ENCODE measurements at regions of chr21 and their contacts with region 1.

Region 1: GRCh38 chr21:36209626-36210171 is 53.1 kb downstream of the DOP1B start:
- DNase-seq: peak; percentile 46 to 53 (median 49)
- H3K4me3 ChIP-seq: no peak overlapping the region
- H3K4me3 Mint-ChIP-seq: no peak overlapping the region
- H3K27ac ChIP-seq: no peak overlapping the region
- H3K27ac Mint-ChIP-seq: peak overlapping the region in 3 of 7 donors; percentile 2 to 22 (median 10)
- H3K4me1 ChIP-seq: no peaks in the 10 kb centered on the region
- H3K4me1 Mint-ChIP-seq: peaks cover 3 to 8% (median 5%) of the 10 kb centered on the region in 4 donors
- H3K27me3 ChIP-seq: no peaks in the 10 kb centered on the region
- H3K27me3 Mint-ChIP-seq: no peaks in the 10 kb centered on the region

Region 2: DNA sequence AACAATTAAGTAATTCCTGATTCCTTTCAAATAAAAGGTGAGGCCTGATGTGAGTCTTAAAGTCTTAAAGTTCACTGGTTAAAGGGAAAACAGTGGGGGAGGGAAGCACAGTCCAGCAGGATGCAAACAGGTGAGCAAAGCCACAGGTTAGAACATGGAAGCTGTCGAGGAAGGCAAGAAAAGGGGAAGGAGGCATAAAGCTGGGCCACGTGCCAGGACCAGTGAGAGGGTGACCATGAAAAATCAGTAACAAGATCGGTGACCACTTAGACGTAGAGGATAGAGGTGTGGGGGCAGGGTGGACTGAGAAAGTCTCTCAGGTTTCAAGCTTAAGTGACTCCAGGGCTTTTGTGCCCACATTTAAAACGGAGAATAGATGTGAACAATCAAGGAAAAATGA is 380.6 kb before region 1 on chr21:
- CTCF ChIA-PET with region 1: no interaction called
- POLR2A ChIA-PET with region 1: no interaction called
- intact Hi-C with region 1: no loop called
- DNase-seq: no peak
- H3K4me3 ChIP-seq: no peak overlapping the region
- H3K4me3 Mint-ChIP-seq: no peak overlapping the region
- H3K27ac ChIP-seq: no peak overlapping the region
- H3K27ac Mint-ChIP-seq: no peak overlapping the region
- H3K4me1 ChIP-seq: no peaks in the 10 kb centered on the region
- H3K4me1 Mint-ChIP-seq: peaks cover 0 to 6% (median 0%) of the 10 kb centered on the region in 4 donors
- H3K27me3 ChIP-seq: no peaks in the 10 kb centered on the region
- H3K27me3 Mint-ChIP-seq: peaks cover 22 to 28% of the 10 kb centered on the region in 2 donors

Region 3: GRCh38 chr21:36028127-36029069 is 181.3 kb before region 1 on chr21:
- CTCF ChIA-PET with region 1: no interaction called
- POLR2A ChIA-PET with region 1: no interaction called
- intact Hi-C with region 1: no loop called
- DNase-seq: peak; percentile 51 to 65 (median 57)
- H3K4me3 ChIP-seq: no peak overlapping the region
- H3K4me3 Mint-ChIP-seq: peak overlapping the region in 1 of 8 donors; percentile 9
- H3K27ac ChIP-seq: no peak overlapping the region
- H3K27ac Mint-ChIP-seq: peak overlapping the region in 2 of 7 donors; percentile 4 to 30
- H3K4me1 ChIP-seq: peaks cover 3% of the 10 kb centered on the region
- H3K4me1 Mint-ChIP-seq: peaks cover 4 to 7% (median 5%) of the 10 kb centered on the region in 4 donors
- H3K27me3 ChIP-seq: no peaks in the 10 kb centered on the region
- H3K27me3 Mint-ChIP-seq: no peaks in the 10 kb centered on the region

Region 4: DNA sequence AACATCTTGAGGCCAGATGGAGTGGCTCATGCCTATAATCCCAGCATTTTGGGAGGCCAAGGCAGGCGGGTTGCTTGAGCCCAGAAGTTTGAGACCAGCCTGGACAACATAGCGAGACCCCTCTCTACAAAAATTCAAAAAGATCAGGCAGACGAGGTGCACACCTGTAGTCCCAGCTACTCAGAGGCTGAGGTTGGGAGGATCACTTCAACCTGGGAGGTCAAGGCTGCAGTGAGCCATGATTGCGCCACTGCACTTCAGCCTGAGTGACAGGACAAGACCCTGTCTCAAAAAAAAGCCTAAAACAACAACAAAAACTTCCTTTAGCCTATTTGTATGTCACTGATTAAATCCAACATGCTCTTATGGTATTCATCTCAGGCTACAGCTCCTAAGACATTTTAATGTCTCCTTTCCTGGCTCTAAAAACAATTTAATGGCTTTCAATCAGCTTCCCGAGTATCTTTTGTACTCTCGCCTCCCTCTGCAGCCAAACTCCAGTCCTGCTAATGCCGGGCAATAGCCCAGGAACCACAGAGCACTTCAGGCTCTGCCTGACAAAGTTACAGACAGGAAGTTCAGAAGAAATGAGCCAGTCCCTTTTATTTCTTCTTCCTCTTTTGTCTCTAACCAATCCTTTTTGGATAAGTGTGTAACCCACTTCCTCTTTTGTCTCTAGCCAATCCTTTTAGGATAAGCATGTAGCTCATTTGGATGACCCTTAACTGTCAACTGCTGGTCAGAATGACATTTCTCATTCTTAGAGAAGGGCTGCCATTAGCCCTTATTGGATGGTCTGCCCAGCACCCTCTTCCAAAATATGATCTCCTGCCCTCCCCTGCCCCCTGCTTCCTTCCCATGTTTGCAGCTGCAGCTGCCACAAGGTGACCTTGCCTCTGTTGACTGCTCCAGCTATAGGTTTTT is 59.6 kb before region 1 on chr21:
- CTCF ChIA-PET with region 1: interaction called, 69 read pairs
- POLR2A ChIA-PET with region 1: interaction called, 3 read pairs
- intact Hi-C with region 1: loop called (anchors 1 kb)
- DNase-seq: no peak
- H3K4me3 ChIP-seq: no peak overlapping the region
- H3K4me3 Mint-ChIP-seq: peak overlapping the region in 7 of 8 donors; percentile 54 to 77 (median 65)
- H3K27ac ChIP-seq: no peak overlapping the region
- H3K27ac Mint-ChIP-seq: peak overlapping the region; percentile 76 to 95 (median 91)
- H3K4me1 ChIP-seq: peaks cover 44% of the 10 kb centered on the region
- H3K4me1 Mint-ChIP-seq: peaks cover 29 to 63% (median 46%) of the 10 kb centered on the region in 4 donors
- H3K27me3 ChIP-seq: no peaks in the 10 kb centered on the region
- H3K27me3 Mint-ChIP-seq: no peaks in the 10 kb centered on the region

Region 5: DNA sequence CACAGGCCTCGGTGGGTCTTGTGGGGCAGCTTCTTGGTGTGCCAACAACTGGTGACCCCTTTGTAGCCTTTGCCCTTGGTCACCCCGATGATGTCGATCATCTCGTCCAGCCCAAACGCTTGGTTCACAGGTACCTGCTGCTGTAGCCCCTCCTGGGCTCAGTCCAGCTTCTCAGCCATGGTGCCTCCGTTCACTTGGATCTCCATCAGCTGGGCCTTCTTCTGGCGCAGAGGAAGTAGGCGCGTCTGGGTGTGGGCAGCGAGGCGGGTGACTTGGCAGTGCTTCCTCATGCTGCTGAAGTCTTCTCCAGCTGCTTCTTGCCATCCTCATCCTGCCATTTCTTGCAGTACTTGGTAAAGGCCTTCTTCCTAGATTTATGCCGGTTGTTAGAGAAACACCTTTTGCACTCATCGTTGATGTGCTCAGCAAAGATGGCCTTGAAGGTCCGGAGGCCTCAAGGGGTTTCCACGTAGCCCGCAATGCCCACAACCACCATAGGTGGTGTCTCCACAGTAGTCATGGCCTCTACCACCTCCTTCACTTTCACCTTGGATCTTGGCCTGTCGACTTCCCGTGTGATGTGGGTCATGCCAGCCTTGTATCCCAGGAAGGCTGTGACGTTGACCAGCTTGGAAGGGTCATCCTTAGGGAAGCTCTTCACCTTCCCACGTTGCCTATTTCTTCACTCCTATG is 40.1 kb before region 1 on chr21:
- CTCF ChIA-PET with region 1: interaction called, 15 read pairs
- POLR2A ChIA-PET with region 1: no interaction called
- intact Hi-C with region 1: loop called (anchors 5 kb)
- DNase-seq: no peak
- H3K4me3 ChIP-seq: no peak overlapping the region
- H3K4me3 Mint-ChIP-seq: no peak overlapping the region
- H3K27ac ChIP-seq: no peak overlapping the region
- H3K27ac Mint-ChIP-seq: peak overlapping the region in 1 of 7 donors; percentile 86
- H3K4me1 ChIP-seq: peaks cover 16% of the 10 kb centered on the region
- H3K4me1 Mint-ChIP-seq: peaks cover 6 to 19% (median 7%) of the 10 kb centered on the region in 4 donors
- H3K27me3 ChIP-seq: no peaks in the 10 kb centered on the region
- H3K27me3 Mint-ChIP-seq: no peaks in the 10 kb centered on the region

Region 6: GRCh38 chr21:36174780-36175179 is 34.9 kb before region 1 on chr21:
- CTCF ChIA-PET with region 1: interaction called, 15 read pairs
- POLR2A ChIA-PET with region 1: no interaction called
- intact Hi-C with region 1: loop called (anchors 5 kb)
- DNase-seq: no peak
- H3K4me3 ChIP-seq: no peak overlapping the region
- H3K4me3 Mint-ChIP-seq: peak overlapping the region in 2 of 8 donors; percentile 13 to 52
- H3K27ac ChIP-seq: no peak overlapping the region
- H3K27ac Mint-ChIP-seq: peak overlapping the region in 5 of 7 donors; percentile 10 to 85 (median 36)
- H3K4me1 ChIP-seq: peaks cover 18% of the 10 kb centered on the region
- H3K4me1 Mint-ChIP-seq: peaks cover 10 to 23% (median 13%) of the 10 kb centered on the region in 4 donors
- H3K27me3 ChIP-seq: no peaks in the 10 kb centered on the region
- H3K27me3 Mint-ChIP-seq: no peaks in the 10 kb centered on the region

Region 7: GRCh38 chr21:36563341-36563926 is 353.7 kb after region 1 on chr21:
- CTCF ChIA-PET with region 1: no interaction called
- POLR2A ChIA-PET with region 1: no interaction called
- intact Hi-C with region 1: no loop called
- DNase-seq: no peak
- H3K4me3 ChIP-seq: no peak overlapping the region
- H3K4me3 Mint-ChIP-seq: no peak overlapping the region
- H3K27ac ChIP-seq: no peak overlapping the region
- H3K27ac Mint-ChIP-seq: no peak overlapping the region
- H3K4me1 ChIP-seq: no peaks in the 10 kb centered on the region
- H3K4me1 Mint-ChIP-seq: no peaks in the 10 kb centered on the region
- H3K27me3 ChIP-seq: peaks cover 5% of the 10 kb centered on the region
- H3K27me3 Mint-ChIP-seq: peaks cover 10 to 31% of the 10 kb centered on the region in 2 donors